Cardiac septum (tissue), 1 donor: ENCODE measurements at regions of chr14 and their contacts with region 1.

Region 1: GRCh38 chr14:62126879-62127478 is 364.8 kb downstream of the SNAPC1 start:
- DNase-seq: no peak

Region 2: GRCh38 chr14:61456720-61457119 is 670.3 kb before region 1 on chr14:
- intact Hi-C with region 1: loop called (anchors 10 kb)
- DNase-seq: peak; percentile 89

Region 3: GRCh38 chr14:61894452-61895077 is 232.4 kb before region 1 on chr14:
- intact Hi-C with region 1: loop called (anchors 10 kb)
- DNase-seq: no peak

Region 4: GRCh38 chr14:62097072-62097471 is 29.9 kb before region 1 on chr14:
- intact Hi-C with region 1: no loop called
- DNase-seq: no peak

Region 5: DNA sequence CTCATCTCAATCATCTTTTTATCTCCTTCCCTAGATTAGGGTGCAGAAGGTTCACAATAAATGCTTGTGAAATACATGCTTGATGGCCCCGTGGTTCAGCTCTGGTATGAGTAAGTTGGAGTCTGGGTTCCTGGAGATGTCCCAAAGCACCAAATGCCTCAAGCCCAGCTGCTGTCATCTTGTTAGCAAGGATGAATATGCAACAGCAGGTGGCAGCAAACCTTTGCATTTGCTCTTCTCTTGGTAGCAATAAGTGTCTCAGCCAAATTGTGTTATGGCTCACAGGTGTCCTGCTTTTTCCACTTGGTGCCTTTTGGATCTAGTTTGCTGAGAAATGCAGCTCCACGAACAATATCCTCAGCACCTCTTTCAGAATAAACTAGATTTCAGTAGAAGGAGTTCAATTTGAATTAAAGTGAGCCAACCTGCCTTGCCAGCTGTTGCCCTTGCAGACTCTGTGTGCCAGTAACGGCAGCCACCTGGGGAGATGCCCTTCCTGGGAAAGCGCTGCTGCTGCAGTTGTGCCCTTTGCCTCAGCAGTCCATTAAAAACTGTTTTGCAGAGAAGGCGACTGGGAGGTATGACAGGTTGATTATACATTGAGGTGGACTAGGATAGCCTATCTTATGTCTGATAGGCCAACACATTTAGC is 52.5 kb after region 1 on chr14:
- intact Hi-C with region 1: no loop called
- DNase-seq: no peak